PC-9 (cell line): ENCODE measurements at regions of chr9 and their contacts with region 1.

Region 1: GRCh38 chr9:71741711-71742648 is 26.3 kb downstream of the CEMIP2 start:
- DNase-seq: peak in 1 of 2 experiments; percentile 56
- H3K4me3 ChIP-seq: no peak overlapping the region
- H3K27ac ChIP-seq: no peak overlapping the region
- H3K4me1 ChIP-seq: peaks cover 35% of the 10 kb centered on the region
- H3K27me3 ChIP-seq: no peaks in the 10 kb centered on the region
- CTCF ChIP-seq: no peak

Region 2: DNA sequence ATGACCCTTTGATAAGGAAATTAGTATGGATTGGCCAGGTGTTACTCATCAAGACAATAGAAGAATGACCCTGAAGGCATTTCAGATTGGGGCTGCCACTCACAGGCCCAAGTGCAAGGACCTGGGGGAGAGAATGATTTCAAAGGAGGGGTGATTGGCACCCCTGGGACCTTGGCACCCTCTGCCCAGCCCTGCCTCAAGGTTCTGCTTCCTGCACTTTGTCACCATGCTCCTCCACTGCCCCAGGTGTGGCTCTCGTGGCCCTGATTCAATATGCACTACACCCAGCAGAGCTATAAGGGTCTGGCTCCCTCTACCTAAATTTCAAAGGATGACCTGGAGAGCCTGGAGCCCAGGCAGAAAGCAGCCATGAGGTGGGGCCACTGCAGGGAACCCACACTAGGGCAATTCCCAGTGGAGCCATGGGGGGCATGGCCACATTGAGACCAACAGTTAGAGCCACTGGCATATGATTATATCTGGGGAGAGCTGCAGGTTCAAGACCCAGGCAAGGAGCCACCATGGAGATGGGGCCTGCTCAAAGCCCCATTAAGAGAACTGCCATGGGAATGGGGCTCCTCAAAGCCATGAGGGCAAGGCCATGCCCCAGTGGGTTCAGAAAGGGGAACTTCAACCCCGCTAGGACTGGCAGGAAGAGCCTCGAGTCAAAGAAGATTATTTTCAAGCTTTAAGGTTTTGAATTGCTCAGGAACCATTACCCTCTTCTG is 66.7 kb before region 1 on chr9:
- CTCF ChIA-PET with region 1: no interaction called
- POLR2A ChIA-PET with region 1: no interaction called
- intact Hi-C with region 1: no loop called
- DNase-seq: peak in 1 of 2 experiments; percentile 60
- H3K4me3 ChIP-seq: no peak overlapping the region
- H3K27ac ChIP-seq: peak overlapping the region; percentile 71
- H3K4me1 ChIP-seq: peaks cover 64% of the 10 kb centered on the region
- H3K27me3 ChIP-seq: no peaks in the 10 kb centered on the region
- CTCF ChIP-seq: no peak

Region 3: DNA sequence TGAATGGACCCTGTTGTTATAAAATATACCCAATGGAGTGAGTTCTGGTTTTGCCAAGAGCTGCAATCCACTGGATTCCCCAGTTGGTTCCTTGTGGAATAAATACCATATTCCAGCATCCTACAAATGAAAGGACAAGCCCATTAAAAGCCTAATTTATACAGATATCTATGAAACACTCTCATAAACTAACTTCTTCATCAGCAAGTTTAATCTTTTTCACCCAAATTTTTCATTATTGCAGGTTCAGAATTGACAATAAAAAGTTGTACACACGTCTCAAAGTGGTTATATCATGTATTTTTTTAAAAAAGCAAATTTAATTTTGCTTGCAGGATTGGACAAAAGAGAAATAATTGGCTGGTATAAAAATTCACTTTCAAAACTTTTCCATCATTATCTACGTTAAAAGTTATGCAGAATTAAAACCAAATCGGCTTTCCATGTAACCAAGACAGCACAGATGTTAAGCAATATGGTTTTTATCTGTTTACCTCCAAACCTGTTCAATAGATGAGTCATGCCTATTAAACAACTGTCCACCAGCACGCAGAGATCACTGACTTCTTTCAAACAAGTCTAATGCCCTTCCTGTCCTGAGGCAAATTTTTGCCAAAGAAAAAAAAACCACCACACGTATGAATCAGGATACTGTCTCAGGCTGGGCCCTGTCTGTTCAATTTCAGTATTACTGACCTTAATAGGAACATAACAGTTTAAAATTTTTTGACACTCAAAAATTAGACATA is 16.2 kb before region 1 on chr9:
- CTCF ChIA-PET with region 1: no interaction called
- POLR2A ChIA-PET with region 1: no interaction called
- intact Hi-C with region 1: loop called (anchors 2 kb)
- DNase-seq: peak; percentile 53 to 97
- H3K4me3 ChIP-seq: no peak overlapping the region
- H3K27ac ChIP-seq: peak overlapping the region; percentile 7; the same call in 1 of the 2 replicates
- H3K4me1 ChIP-seq: peaks cover 25% of the 10 kb centered on the region
- H3K27me3 ChIP-seq: no peaks in the 10 kb centered on the region
- CTCF ChIP-seq: no peak

Region 4: GRCh38 chr9:71758785-71759184 is 16.8 kb after region 1 on chr9:
- CTCF ChIA-PET with region 1: no interaction called
- POLR2A ChIA-PET with region 1: interaction called, 17 read pairs
- intact Hi-C with region 1: loop called (anchors 2 kb)
- DNase-seq: peak; percentile 37 to 92
- H3K4me3 ChIP-seq: peak overlapping the region; percentile 28; the same call in 1 of the 2 replicates
- H3K27ac ChIP-seq: peak overlapping the region; percentile 46
- H3K4me1 ChIP-seq: peaks cover 63% of the 10 kb centered on the region
- H3K27me3 ChIP-seq: no peaks in the 10 kb centered on the region
- CTCF ChIP-seq: no peak